Right cardiac atrium (tissue), 5 donors: ENCODE measurements at regions of chr9 and their contacts with region 1.

Region 1: DNA sequence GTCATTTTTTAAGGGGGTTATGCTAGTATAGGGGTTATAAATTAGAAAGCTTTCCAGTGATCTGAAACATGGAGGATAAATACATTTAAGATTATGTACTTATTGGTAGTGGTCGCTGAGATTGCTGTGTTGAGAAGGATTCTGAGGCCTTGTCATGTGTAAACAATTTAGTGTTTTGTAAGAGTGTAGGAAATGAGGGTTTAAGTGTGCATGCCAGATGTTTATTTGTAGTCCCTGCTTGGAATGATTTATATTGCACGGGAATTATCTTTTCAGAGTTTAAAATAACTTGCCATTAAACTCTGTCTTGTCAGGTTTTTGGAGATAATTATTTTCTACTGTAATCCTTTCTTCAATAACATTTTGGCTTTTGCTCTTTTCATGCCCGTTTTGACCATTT is 19.4 kb downstream of the ZNF618 start:
- DNase-seq: no peak
- ATAC-seq: no peak
- H3K4me3 ChIP-seq: no peak overlapping the region
- H3K27ac ChIP-seq: no peak overlapping the region
- H3K4me1 ChIP-seq: peaks cover 3% of the 10 kb centered on the region
- H3K27me3 ChIP-seq: no peaks in the 10 kb centered on the region

Region 2: DNA sequence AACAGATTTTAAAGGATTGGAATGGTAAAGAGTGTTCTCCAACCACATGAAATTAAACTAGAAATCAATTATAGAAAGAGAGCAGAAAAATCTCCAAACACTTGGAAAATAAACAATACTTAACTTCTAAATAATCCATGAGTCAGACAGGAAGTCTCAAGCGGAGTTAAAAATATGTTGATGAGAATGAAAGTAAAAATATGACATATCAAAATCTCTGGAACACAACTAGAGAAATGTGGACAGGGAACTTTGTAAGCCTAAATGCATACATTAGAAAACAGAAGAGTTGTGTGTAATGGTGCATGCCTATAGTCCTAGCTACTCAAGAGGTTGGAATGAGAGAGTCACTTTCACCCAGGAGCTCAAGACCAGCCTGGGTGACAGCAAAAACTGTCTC is 67.3 kb before region 1 on chr9:
- intact Hi-C with region 1: no loop called
- DNase-seq: no peak
- ATAC-seq: no peak
- H3K4me3 ChIP-seq: no peak overlapping the region
- H3K27ac ChIP-seq: no peak overlapping the region
- H3K4me1 ChIP-seq: no peaks in the 10 kb centered on the region
- H3K27me3 ChIP-seq: no peaks in the 10 kb centered on the region

Region 3: GRCh38 chr9:113973851-113974413 is 78.4 kb after region 1 on chr9:
- intact Hi-C with region 1: loop called in 1 of 4 experiments (anchors 10 kb)
- DNase-seq: no peak
- ATAC-seq: no peak
- H3K4me3 ChIP-seq: no peak overlapping the region
- H3K27ac ChIP-seq: no peak overlapping the region
- H3K4me1 ChIP-seq: peaks cover 2% of the 10 kb centered on the region
- H3K27me3 ChIP-seq: no peaks in the 10 kb centered on the region